Mammary epithelial cell (primary cell): ENCODE measurements at regions of chr1 and their contacts with region 1.

Region 1: DNA sequence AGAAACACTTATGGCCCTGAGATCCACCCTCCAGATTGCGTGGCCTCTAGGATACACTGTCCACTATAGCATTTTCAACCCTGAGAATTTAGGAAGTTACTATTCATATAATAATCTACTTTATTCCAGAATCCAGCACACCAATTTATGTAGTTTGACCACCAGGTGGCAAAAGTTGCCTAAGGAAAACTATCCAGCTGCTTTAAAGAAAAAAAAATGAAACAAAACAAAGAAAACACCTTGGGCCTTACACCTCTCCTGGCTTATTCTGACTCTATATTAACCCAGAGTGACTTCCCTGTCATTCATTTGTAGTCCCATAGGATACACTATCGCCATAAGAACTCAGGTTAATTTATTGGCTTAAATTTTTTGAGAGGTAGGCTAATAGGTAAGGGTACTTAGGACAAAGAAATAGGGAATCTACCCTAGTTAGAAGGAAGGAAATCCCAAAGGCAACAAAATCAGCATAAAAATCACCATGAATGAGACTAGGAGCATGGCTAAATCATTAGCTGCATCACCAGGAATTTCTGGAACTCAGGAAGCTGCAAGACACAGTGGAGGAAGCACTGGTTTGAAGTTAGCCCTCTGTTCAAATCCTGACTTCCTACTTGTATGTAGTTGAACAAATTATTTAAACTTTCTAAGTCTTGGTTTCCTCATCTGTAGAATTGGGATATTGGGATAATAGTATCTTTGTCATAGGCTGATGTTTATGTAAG is 107.5 kb downstream of the SPAG17 start:
- DNase-seq: peak; percentile 28
- H3K4me3 ChIP-seq: no peak overlapping the region
- H3K27ac ChIP-seq: no peak overlapping the region
- H3K4me1 ChIP-seq: no peaks in the 10 kb centered on the region
- H3K27me3 ChIP-seq: peaks cover 2% of the 10 kb centered on the region
- CTCF ChIP-seq: peak; percentile 44 to 61

Region 2: GRCh38 chr1:117512743-117513321 is 564.7 kb before region 1 on chr1:
- CTCF ChIA-PET with region 1: interaction called, 14 read pairs
- dilution Hi-C with region 1: no loop called
- in situ Hi-C with region 1: no loop called
- intact Hi-C with region 1: no loop called
- DNase-seq: peak; percentile 6
- H3K4me3 ChIP-seq: no peak overlapping the region
- H3K27ac ChIP-seq: no peak overlapping the region
- H3K4me1 ChIP-seq: no peaks in the 10 kb centered on the region
- H3K27me3 ChIP-seq: no peaks in the 10 kb centered on the region
- CTCF ChIP-seq: peak; percentile 46 to 63

Region 3: DNA sequence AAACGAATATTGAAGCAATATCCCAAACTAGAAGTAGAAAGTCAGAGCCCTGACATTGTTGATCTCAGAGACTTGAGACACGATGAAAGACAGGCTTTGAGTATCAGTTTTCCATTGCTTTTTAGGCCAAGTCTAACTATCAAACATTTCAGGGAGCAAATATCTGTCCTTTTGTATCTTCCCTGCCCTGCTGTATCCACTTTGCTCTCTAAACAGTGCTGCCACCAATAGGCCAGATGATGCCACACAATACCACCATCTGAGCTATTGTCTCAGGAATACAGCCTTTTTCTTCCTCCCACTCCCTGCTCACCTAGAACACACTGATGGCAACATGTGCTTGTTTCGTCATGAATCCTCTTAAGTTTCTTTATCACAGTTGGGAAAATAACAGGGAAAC is 170.1 kb after region 1 on chr1:
- CTCF ChIA-PET with region 1: no interaction called
- dilution Hi-C with region 1: no loop called
- in situ Hi-C with region 1: no loop called
- intact Hi-C with region 1: loop called (anchors 5 kb)
- DNase-seq: peak; percentile 23
- H3K4me3 ChIP-seq: no peak overlapping the region
- H3K27ac ChIP-seq: no peak overlapping the region
- H3K4me1 ChIP-seq: no peaks in the 10 kb centered on the region
- H3K27me3 ChIP-seq: no peaks in the 10 kb centered on the region
- CTCF ChIP-seq: peak; percentile 50 to 79

Region 4: GRCh38 chr1:118304722-118305359 is 227.3 kb after region 1 on chr1:
- CTCF ChIA-PET with region 1: no interaction called
- dilution Hi-C with region 1: no loop called
- in situ Hi-C with region 1: no loop called
- intact Hi-C with region 1: loop called (anchors 10 kb)
- DNase-seq: no peak
- H3K4me3 ChIP-seq: no peak overlapping the region
- H3K27ac ChIP-seq: no peak overlapping the region
- H3K4me1 ChIP-seq: no peaks in the 10 kb centered on the region
- H3K27me3 ChIP-seq: no peaks in the 10 kb centered on the region
- CTCF ChIP-seq: peak; percentile 74